ENCODE measurements at regions of chr5 and their contacts with region 1.

Region 1: GRCh38 chr5:50751064-50751657 is 84.7 kb downstream of the PARP8 start:
- DNase-seq: peak; percentile 71
- H3K4me3 Mint-ChIP-seq: no peak overlapping the region
- H3K27ac Mint-ChIP-seq: no peak overlapping the region
- H3K4me1 Mint-ChIP-seq: peaks cover 7% of the 10 kb centered on the region
- H3K27me3 Mint-ChIP-seq: no peaks in the 10 kb centered on the region
- CTCF ChIP-seq: peak; percentile 65

Region 2: DNA sequence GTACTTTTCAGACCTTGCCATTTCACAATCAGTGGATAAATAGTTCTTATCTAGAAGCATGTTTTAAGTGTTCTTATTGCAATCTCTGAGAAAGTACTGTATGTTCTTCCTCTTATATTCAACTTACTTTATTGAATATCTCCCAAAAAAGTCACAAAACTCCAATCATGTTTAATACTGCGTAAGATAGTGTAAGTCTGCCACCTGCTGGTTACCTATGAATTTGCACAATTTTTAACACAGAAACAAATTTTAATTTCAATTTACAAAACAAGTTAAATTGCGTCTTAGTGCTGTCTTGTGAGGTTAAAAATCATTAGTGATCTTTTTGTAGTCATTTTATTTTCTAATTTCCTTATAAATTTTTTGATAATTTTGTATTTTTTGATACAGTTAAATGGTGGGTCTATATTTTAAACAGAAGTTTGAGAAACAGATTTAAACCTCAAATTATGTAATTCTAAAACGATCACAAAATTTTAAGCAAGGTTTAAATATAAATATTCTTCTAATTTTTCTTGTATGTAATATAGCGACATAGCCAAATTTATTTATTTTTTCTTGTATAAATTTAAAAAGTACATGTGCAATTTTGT is 425.8 kb before region 1 on chr5:
- CTCF ChIA-PET with region 1: no interaction called
- POLR2A ChIA-PET with region 1: no interaction called
- intact Hi-C with region 1: loop called (anchors 5 kb)
- DNase-seq: peak; percentile 40
- H3K4me3 Mint-ChIP-seq: no peak overlapping the region
- H3K27ac Mint-ChIP-seq: no peak overlapping the region
- H3K4me1 Mint-ChIP-seq: no peaks in the 10 kb centered on the region
- H3K27me3 Mint-ChIP-seq: no peaks in the 10 kb centered on the region
- CTCF ChIP-seq: peak; percentile 68

Region 3: GRCh38 chr5:50440651-50441492 is 310.3 kb before region 1 on chr5 and contains the start of gene EMB:
- CTCF ChIA-PET with region 1: interaction called, 7 read pairs
- POLR2A ChIA-PET with region 1: interaction called, 3 read pairs
- intact Hi-C with region 1: loop called (anchors 2 kb)
- DNase-seq: peak; percentile 75
- H3K4me3 Mint-ChIP-seq: peak within 1 kb of the TSS; percentile 86
- H3K27ac Mint-ChIP-seq: peak within 1 kb of the TSS; percentile 81
- H3K4me1 Mint-ChIP-seq: peaks cover 20% of the 10 kb centered on the region
- H3K27me3 Mint-ChIP-seq: no peaks in the 10 kb centered on the region
- CTCF ChIP-seq: peak; percentile 27
- total RNA-seq, gene EMB: 27.7 and 31.2 TPM in 2 replicates

Region 4: DNA sequence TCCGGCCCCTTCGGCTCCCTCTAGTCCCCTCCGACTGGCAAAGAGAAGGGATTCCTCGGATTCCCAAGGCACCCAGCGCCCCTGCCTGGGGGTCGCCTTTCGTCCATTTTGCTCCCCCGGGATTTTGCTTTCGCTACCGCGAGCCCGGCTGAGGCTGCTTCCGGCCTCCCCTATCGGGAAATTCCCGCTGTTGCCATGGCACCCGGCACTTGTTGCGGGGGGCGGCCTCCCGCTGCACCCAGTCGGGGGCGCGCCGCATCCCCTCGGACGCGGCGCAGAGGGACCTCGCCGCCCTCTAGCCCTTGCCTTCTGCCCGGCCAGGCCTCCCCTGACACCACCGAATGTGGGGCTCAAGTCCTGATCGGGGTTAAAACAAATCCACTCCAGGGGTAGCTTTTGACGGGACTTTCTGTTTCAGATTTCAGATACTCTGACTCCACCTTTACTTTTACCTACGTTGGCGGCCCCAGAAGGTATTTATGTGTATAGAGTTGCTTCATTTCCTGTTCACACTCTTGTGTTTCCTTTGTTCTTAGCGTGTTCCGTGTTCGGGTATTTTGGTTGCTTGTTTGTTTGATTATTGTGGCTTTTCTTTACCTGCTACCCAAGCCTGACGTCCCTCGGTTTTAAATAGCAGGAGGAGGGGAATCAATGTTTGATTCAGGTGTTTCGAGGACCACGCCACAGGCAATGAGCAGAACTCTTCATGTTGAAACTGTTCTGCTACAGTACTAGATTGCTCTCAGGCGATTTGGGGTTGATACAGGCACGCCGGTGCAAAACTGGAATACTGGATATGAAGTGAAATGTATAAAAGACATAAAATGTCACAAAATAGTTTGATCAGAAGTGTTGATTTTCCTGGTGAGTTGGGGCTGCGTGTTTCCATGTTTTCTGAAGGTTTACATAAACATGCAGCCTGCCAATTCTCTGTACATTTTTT is 83.2 kb before region 1 on chr5:
- CTCF ChIA-PET with region 1: interaction called, 7 read pairs
- POLR2A ChIA-PET with region 1: interaction called, 5 read pairs
- intact Hi-C with region 1: loop called (anchors 1 kb)
- DNase-seq: peak; percentile 64
- H3K4me3 Mint-ChIP-seq: peak overlapping the region; percentile 88
- H3K27ac Mint-ChIP-seq: peak overlapping the region; percentile 99
- H3K4me1 Mint-ChIP-seq: no peaks in the 10 kb centered on the region
- H3K27me3 Mint-ChIP-seq: no peaks in the 10 kb centered on the region
- CTCF ChIP-seq: no peak